Calu3 (cell line): ENCODE measurements at regions of chr9 and their contacts with region 1.

Region 1: DNA sequence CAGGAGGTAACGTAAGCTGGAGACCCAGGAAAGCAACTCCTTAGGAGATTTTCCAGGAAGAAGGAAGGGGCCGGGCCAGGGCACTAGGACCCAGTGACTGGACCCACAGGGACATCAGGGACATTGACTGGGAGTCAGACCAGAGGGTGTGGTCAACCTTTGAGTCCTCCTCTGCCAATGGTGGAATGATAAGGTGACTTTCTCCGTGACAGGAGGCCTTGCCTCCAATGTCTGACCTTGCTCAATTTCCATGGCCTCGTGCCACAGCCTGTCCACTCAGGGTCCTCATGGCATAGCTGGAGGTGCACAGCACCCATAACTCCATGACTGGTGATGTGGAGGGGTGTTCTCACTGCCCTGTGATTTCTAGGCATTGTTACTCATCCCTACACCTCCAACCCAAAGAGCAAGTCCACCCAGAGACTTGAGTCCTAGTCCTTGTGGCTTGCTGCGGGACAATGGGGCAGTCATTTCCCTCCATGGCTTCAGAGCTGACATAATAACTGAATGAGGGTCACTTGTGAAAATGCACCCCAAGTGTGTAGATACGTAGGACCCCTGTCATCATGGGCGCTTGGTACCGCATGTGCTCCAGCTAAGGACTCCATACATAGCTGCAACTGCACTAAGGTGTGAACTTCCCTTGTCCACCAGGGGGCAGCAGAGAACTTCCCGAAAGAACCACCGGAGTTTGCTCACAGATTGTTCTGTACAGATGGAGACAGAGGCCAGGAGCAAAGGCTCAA is 4.1 kb upstream of the AMBP start:
- DNase-seq: peak; percentile 88
- H3K4me3 Mint-ChIP-seq: peak overlapping the region; percentile 35
- H3K27ac Mint-ChIP-seq: peak overlapping the region; percentile 86
- H3K4me1 Mint-ChIP-seq: peaks cover 41% of the 10 kb centered on the region
- H3K27me3 Mint-ChIP-seq: no peaks in the 10 kb centered on the region
- CTCF ChIP-seq: peak; percentile 79

Region 2: GRCh38 chr9:114033397-114034103 is 48.6 kb before region 1 on chr9:
- CTCF ChIA-PET with region 1: no interaction called
- intact Hi-C with region 1: no loop called
- DNase-seq: peak; percentile 20
- H3K4me3 Mint-ChIP-seq: no peak overlapping the region
- H3K27ac Mint-ChIP-seq: no peak overlapping the region
- H3K4me1 Mint-ChIP-seq: no peaks in the 10 kb centered on the region
- H3K27me3 Mint-ChIP-seq: no peaks in the 10 kb centered on the region
- CTCF ChIP-seq: no peak

Region 3: GRCh38 chr9:114098016-114098935 is 16.1 kb after region 1 on chr9:
- CTCF ChIA-PET with region 1: interaction called, 14 read pairs
- intact Hi-C with region 1: no loop called
- DNase-seq: peak; percentile 80
- H3K4me3 Mint-ChIP-seq: peak overlapping the region; percentile 81
- H3K27ac Mint-ChIP-seq: peak overlapping the region; percentile 76
- H3K4me1 Mint-ChIP-seq: peaks cover 26% of the 10 kb centered on the region
- H3K27me3 Mint-ChIP-seq: no peaks in the 10 kb centered on the region
- CTCF ChIP-seq: no peak

Region 4: GRCh38 chr9:114155263-114155972 is 73.2 kb after region 1 on chr9 and contains the start of gene COL27A1:
- CTCF ChIA-PET with region 1: interaction called, 9 read pairs
- intact Hi-C with region 1: loop called (anchors 2 kb)
- DNase-seq: peak; percentile 89
- H3K4me3 Mint-ChIP-seq: peak within 1 kb of the TSS; percentile 58
- H3K27ac Mint-ChIP-seq: peak within 1 kb of the TSS; percentile 52
- H3K4me1 Mint-ChIP-seq: peaks cover 31% of the 10 kb centered on the region
- H3K27me3 Mint-ChIP-seq: peaks cover 16% of the 10 kb centered on the region
- CTCF ChIP-seq: peak; percentile 76
- total RNA-seq, gene COL27A1: 20.1 and 21.4 TPM in 2 replicates